A673 (cell line): ENCODE measurements at regions of chr3 and their contacts with region 1.

Region 1: GRCh38 chr3:41346698-41347270 is 147.5 kb downstream of the CTNNB1 start:
- DNase-seq: no peak
- H3K4me3 ChIP-seq: no peak overlapping the region
- H3K27ac ChIP-seq: no peak overlapping the region
- H3K4me1 ChIP-seq: no peaks in the 10 kb centered on the region
- H3K27me3 ChIP-seq: no peaks in the 10 kb centered on the region
- CTCF ChIP-seq: no peak

Region 2: GRCh38 chr3:40366203-40367162 is 980.3 kb before region 1 on chr3:
- CTCF ChIA-PET with region 1: no interaction called
- POLR2A ChIA-PET with region 1: no interaction called
- intact Hi-C with region 1: no loop called
- DNase-seq: no peak
- H3K4me3 ChIP-seq: no peak overlapping the region
- H3K27ac ChIP-seq: no peak overlapping the region
- H3K4me1 ChIP-seq: no peaks in the 10 kb centered on the region
- H3K27me3 ChIP-seq: no peaks in the 10 kb centered on the region
- CTCF ChIP-seq: no peak

Region 3: DNA sequence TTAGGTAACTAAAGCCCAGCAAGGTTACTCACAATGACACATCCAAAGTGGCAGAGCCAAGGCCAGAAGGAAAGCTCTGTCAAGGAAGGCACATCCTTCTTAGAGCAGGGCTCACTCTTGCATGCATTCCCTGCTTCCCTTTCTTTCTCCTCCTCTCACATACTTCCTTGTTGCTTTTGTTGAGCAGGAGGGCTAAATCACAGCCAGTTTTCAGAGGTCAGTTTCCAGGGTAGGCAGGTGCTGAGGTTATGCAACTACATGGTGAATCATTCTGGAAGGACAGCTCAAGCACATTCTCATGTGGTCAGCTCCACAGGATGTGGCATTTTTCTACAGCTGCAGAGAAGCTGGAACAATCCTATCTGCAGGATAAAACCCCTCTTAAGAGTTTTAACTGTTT is 546.4 kb before region 1 on chr3:
- CTCF ChIA-PET with region 1: no interaction called
- POLR2A ChIA-PET with region 1: no interaction called
- intact Hi-C with region 1: no loop called
- DNase-seq: no peak
- H3K4me3 ChIP-seq: no peak overlapping the region
- H3K27ac ChIP-seq: no peak overlapping the region
- H3K4me1 ChIP-seq: no peaks in the 10 kb centered on the region
- H3K27me3 ChIP-seq: no peaks in the 10 kb centered on the region
- CTCF ChIP-seq: no peak

Region 4: DNA sequence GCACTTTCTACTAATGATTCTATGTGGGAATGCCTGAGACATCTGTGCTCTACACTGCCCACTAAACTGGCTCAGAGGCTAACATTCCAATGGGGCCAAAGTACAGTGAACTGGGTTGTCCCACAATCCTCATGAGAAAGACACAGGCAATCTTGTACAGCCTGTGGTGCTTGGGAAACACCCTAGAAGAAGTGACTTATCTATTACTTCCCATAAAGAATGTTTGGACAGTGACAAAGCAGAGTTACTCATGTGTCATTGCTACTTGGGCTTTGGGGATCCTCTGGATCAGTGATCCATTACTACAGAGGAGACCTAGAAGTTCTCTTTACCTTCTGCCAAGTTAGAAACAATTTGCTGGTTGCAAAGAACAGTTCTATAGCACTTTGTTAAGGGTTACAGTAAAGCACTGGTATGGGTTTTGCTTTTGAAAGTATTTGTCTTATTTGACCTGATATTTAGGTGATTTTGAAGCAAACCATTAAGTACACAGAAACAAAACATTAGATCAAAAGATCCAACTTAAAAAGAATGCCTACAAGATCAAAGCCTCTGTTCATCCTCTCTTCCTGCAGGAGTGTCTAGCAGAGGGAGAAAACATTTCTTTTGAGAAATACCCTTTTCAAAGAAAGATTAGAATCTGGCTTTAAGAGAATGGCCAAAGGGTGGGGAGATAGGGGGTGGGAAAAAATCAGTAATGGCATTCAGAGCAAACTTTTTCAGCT is 71.7 kb before region 1 on chr3:
- CTCF ChIA-PET with region 1: no interaction called
- POLR2A ChIA-PET with region 1: interaction called, 10 read pairs
- intact Hi-C with region 1: no loop called
- DNase-seq: no peak
- H3K4me3 ChIP-seq: no peak overlapping the region
- H3K27ac ChIP-seq: no peak overlapping the region
- H3K4me1 ChIP-seq: no peaks in the 10 kb centered on the region
- H3K27me3 ChIP-seq: no peaks in the 10 kb centered on the region
- CTCF ChIP-seq: no peak

Region 5: DNA sequence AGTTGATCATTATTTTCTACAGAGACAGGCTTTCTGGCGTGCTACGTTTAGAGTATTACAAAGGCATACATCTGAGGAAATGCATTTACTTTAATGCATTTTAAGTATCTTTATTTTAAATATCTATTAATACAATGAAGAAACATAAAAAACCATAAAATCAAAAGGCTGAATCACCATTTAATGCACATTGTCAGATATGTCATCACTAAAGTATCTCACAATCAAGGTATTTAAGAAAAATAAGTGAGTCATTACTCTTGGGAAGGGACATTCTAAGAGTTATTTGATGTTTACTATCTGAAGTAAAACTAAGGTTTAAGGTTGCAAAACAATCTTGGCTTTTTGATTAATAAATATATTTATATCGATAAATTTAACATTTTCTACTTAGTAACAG is 45.2 kb before region 1 on chr3:
- CTCF ChIA-PET with region 1: no interaction called
- POLR2A ChIA-PET with region 1: no interaction called
- intact Hi-C with region 1: no loop called
- DNase-seq: no peak
- H3K4me3 ChIP-seq: no peak overlapping the region
- H3K27ac ChIP-seq: no peak overlapping the region
- H3K4me1 ChIP-seq: no peaks in the 10 kb centered on the region
- H3K27me3 ChIP-seq: no peaks in the 10 kb centered on the region
- CTCF ChIP-seq: no peak